ENCODE measurements at regions of chrX and their contacts with region 1.

Region 1: DNA sequence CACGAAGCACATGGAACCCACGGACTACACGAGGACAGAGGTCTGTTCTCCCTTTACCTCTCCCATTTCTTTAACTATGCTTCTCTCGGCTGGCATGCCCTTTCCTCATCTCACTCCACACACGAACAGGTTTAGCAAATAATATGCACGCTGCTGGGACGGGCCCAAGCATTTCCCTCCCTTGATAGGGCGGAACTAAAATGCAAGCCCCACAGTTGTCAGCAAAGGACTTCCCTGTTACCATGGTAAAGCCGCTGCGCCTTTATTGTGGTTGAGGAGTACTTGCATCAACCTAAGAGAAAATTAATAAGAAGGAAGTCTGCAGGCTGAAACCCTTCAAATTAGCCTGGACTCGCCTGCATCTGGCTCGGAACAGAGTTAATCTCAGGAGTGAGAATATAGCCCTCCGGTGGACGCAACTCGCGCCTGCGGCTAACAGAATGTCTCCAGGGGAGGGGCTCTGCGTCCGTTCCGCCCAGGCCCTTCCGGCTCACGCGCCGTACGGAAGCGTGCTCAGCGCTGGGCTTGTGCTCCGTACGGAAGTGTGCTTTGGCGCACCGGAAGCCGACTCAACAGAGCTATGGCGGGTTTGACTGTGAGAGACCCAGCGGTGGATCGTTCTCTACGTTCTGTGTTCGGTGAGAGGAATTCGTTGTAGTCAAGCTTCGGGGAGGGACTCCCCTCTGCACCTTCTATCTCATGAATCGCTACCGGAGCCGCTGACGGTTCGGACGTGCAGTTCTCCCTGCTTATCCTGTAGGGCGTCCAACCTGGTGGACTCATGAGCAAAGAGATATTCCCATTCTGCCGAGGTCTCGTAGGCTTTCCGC is at the start of gene CSTF2:
- DNase-seq: peak; percentile 75
- H3K4me3 Mint-ChIP-seq: peak within 1 kb of the TSS; percentile 91
- H3K27ac Mint-ChIP-seq: peak within 1 kb of the TSS; percentile 97
- H3K4me1 Mint-ChIP-seq: peaks cover 10% of the 10 kb centered on the region
- H3K27me3 Mint-ChIP-seq: peaks cover 6% of the 10 kb centered on the region
- total RNA-seq, gene CSTF2: 51.1 and 52.7 TPM in 2 replicates

Region 2: DNA sequence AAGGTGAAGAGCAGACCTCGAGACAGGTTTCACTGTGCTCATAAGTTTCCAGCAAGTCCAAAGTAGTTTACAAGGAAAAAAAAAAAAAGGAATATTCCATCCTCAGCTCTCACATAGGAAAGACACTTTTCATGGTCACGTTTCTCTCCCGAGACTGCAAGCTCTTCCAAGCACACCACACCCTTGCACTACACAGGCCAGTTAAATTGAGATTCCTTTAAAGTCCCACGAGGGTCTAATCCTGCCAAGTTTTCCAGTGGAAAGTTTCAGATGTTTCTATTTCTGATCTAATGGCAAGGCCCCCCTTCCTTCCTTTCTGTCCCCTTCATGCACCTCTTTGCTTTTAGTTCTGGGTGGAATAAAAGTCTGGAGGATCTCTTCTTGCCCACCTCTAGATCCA is 342.1 kb before region 1 on chrX:
- intact Hi-C with region 1: no loop called
- DNase-seq: no peak
- H3K4me3 Mint-ChIP-seq: no peak overlapping the region
- H3K27ac Mint-ChIP-seq: no peak overlapping the region
- H3K4me1 Mint-ChIP-seq: no peaks in the 10 kb centered on the region
- H3K27me3 Mint-ChIP-seq: no peaks in the 10 kb centered on the region

Region 3: GRCh38 chrX:100615005-100615404 is 205.0 kb before region 1 on chrX:
- intact Hi-C with region 1: no loop called
- DNase-seq: no peak
- H3K4me3 Mint-ChIP-seq: no peak overlapping the region
- H3K27ac Mint-ChIP-seq: no peak overlapping the region
- H3K4me1 Mint-ChIP-seq: no peaks in the 10 kb centered on the region
- H3K27me3 Mint-ChIP-seq: peaks cover 13% of the 10 kb centered on the region

Region 4: GRCh38 chrX:100928660-100929613 is 108.9 kb after region 1 on chrX and contains the start of gene XKRX:
- intact Hi-C with region 1: loop called (anchors 10 kb)
- DNase-seq: peak; percentile 8
- H3K4me3 Mint-ChIP-seq: peak within 1 kb of the TSS; percentile 79
- H3K27ac Mint-ChIP-seq: no peak within 1 kb of the TSS
- H3K4me1 Mint-ChIP-seq: peaks cover 18% of the 10 kb centered on the region
- H3K27me3 Mint-ChIP-seq: peaks cover 1% of the 10 kb centered on the region
- total RNA-seq, gene XKRX: 0.23 and 0.25 TPM in 2 replicates

Region 5: GRCh38 chrX:100939333-100939732 is 119.3 kb after region 1 on chrX:
- intact Hi-C with region 1: no loop called
- DNase-seq: no peak
- H3K4me3 Mint-ChIP-seq: no peak overlapping the region
- H3K27ac Mint-ChIP-seq: no peak overlapping the region
- H3K4me1 Mint-ChIP-seq: no peaks in the 10 kb centered on the region
- H3K27me3 Mint-ChIP-seq: no peaks in the 10 kb centered on the region

Region 6: DNA sequence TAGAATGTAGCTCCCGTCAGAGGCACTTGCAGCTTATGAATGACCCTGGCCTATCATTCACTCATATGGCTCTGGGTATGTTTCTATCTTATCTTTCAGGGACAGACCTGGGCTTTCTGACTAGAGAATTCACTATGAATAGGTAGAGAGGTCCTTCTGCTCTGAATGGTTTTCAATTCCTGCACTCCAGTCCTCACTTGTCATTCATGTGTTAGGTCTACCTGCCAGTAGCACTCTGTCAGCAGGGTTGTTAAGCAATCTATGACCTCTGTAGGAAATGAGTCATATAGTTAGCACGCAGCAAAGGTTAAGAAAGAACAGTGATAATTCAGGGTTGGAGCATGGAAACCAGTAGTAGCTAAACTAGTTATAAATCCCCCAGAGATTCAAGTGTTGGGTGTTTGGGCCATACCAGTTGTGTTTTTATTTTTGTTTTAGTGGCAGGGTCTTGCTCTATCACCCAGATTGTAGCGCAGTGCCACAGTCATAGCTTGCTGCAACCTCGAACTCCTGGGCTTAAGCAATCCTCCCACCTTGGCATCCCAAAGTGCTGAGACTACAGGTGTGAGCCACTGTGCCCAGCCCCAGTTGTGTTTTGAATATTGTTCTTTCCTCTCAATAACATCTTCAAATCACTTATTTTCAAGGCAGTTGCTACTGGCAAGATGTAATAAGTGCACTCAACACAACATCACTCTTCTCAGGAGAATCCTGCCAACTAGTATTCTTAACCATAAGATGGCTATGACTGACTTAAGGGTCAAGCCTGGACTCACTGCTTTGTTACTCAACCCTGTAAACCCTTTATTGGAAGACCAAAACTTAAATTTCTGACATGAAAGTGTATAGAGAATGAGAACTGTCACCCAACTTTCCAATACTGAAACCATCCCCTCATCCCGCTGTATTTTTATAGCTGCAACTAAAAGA is 174.6 kb after region 1 on chrX:
- intact Hi-C with region 1: loop called (anchors 10 kb)
- DNase-seq: no peak
- H3K4me3 Mint-ChIP-seq: peak overlapping the region; percentile 17
- H3K27ac Mint-ChIP-seq: peak overlapping the region; percentile 63
- H3K4me1 Mint-ChIP-seq: peaks cover 16% of the 10 kb centered on the region
- H3K27me3 Mint-ChIP-seq: no peaks in the 10 kb centered on the region

Region 7: GRCh38 chrX:101051549-101052302 is 231.7 kb after region 1 on chrX and contains the start of gene TRMT2B:
- intact Hi-C with region 1: loop called (anchors 5 kb)
- DNase-seq: peak; percentile 78
- H3K4me3 Mint-ChIP-seq: peak within 1 kb of the TSS; percentile 86
- H3K27ac Mint-ChIP-seq: peak within 1 kb of the TSS; percentile 96
- H3K4me1 Mint-ChIP-seq: peaks cover 18% of the 10 kb centered on the region
- H3K27me3 Mint-ChIP-seq: no peaks in the 10 kb centered on the region
- total RNA-seq, gene TRMT2B: 21.5 and 24.4 TPM in 2 replicates

Region 8: GRCh38 chrX:101097546-101098453 is 277.7 kb after region 1 on chrX and contains the start of gene CENPI:
- intact Hi-C with region 1: loop called (anchors 5 kb)
- DNase-seq: peak; percentile 93
- H3K4me3 Mint-ChIP-seq: peak within 1 kb of the TSS; percentile 96
- H3K27ac Mint-ChIP-seq: peak within 1 kb of the TSS; percentile 84
- H3K4me1 Mint-ChIP-seq: peaks cover 20% of the 10 kb centered on the region
- H3K27me3 Mint-ChIP-seq: no peaks in the 10 kb centered on the region
- total RNA-seq, gene CENPI: 20.7 and 20.9 TPM in 2 replicates

Region 9: DNA sequence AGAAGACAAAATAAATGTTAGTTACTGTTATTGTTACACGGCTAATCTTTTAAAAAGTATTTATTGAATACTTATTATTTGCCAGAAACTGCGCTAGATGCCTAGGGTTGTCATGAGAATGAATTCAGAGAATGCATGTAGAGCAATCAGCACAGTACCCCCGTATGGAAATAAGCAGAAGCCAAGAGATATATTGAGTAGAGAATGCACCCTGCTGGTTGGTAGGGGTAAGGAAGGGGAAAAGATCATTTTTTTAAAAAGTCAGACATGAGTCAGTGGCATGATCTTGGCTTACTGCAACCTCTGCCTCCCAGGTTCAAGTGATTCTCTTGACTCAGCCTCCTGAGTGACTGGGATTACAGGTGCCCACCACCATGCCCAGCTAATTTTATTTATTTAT is 386.4 kb after region 1 on chrX:
- intact Hi-C with region 1: loop called (anchors 5 kb)
- DNase-seq: no peak
- H3K4me3 Mint-ChIP-seq: no peak overlapping the region
- H3K27ac Mint-ChIP-seq: no peak overlapping the region
- H3K4me1 Mint-ChIP-seq: peaks cover 12% of the 10 kb centered on the region
- H3K27me3 Mint-ChIP-seq: no peaks in the 10 kb centered on the region

Measured in activated T-helper 2 cell treated with anti-CD3 and anti-CD28 coated beads, Interferon-gamma antibody, Interleukin-2, Interleukin-4, amounts not matched to agents 10 μg/mL and 5 μg/mL and 100 μg/mL, durations not matched to agents 14 hours and 24 hours and 36 hours (primary cell).